ENCODE measurements at regions of chr2 and their contacts with region 1.

Region 1: GRCh38 chr2:139369423-139370409 is 589.5 kb upstream of the NXPH2 start:
- DNase-seq: no peak

Region 2: DNA sequence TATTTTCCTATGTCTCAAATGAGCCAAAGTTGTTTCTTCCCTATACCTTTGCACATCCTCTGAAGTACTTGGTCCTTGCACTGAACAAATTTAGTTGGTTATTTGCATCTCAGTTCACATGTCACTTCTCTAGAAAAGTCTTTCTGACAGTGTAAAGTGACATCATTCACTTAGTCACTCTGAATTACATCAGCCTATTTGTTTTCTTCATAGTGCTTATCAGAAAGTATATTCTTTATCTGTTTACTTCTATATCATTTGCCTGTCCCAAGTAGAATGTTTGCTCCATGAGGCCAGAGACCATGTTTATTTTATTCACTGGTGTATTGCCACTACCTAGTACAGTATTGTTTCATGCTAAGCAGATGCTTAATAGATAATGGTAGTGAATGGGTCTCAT is 1231.8 kb before region 1 on chr2:
- intact Hi-C with region 1: loop called in 1 of 2 experiments (anchors 5 kb)
- DNase-seq: no peak